Naive thymus-derived CD8-positive, alpha-beta T cell (primary cell): ENCODE measurements at regions of chr2 and their contacts with region 1.

Region 1: GRCh38 chr2:55617175-55618024 is at the start of gene PPP4R3B:
- DNase-seq: peak; percentile 92 to 100 (median 99)
- ATAC-seq: peak; percentile 83 to 86
- H3K4me3 Mint-ChIP-seq: no peak within 1 kb of the TSS
- H3K27ac Mint-ChIP-seq: no peak within 1 kb of the TSS
- H3K4me1 Mint-ChIP-seq: peaks cover 12 to 56% (median 28%) of the 10 kb centered on the region in 4 donors
- H3K27me3 Mint-ChIP-seq: no peaks in the 10 kb centered on the region
- polyA plus RNA-seq, gene PPP4R3B: 59.2 to 75.2 (median 66.3) TPM

Region 2: GRCh38 chr2:55419679-55420438 is 197.5 kb before region 1 on chr2 and contains the start of gene CCDC88A:
- POLR2A ChIA-PET with region 1: interaction called, 10 read pairs
- DNase-seq: peak; percentile 76 to 91 (median 84)
- ATAC-seq: peak; percentile 82 to 85
- H3K4me3 Mint-ChIP-seq: peak within 1 kb of the TSS; percentile 91 to 97 (median 94)
- H3K27ac Mint-ChIP-seq: peak within 1 kb of the TSS; percentile 77 to 96 (median 92)
- H3K4me1 Mint-ChIP-seq: peaks cover 9 to 38% (median 35%) of the 10 kb centered on the region in 4 donors
- H3K27me3 Mint-ChIP-seq: peaks cover 0 to 4% (median 0%) of the 10 kb centered on the region in 5 donors
- polyA plus RNA-seq, gene CCDC88A: 0.87 to 5.0 (median 4.1) TPM

Region 3: GRCh38 chr2:55519938-55520885 is 97.2 kb before region 1 on chr2:
- POLR2A ChIA-PET with region 1: interaction called, 75 read pairs
- DNase-seq: peak in 7 of 10 donors; percentile 6 to 73 (median 39)
- ATAC-seq: peak; percentile 36 to 37
- H3K4me3 Mint-ChIP-seq: peak overlapping the region; percentile 93 to 100 (median 99)
- H3K27ac Mint-ChIP-seq: peak overlapping the region; percentile 97 to 100 (median 100)
- H3K4me1 Mint-ChIP-seq: peaks cover 10 to 22% (median 20%) of the 10 kb centered on the region in 4 donors
- H3K27me3 Mint-ChIP-seq: peaks cover 0 to 2% (median 0%) of the 10 kb centered on the region in 5 donors